ENCODE measurements at regions of chr9 and their contacts with region 1.

Region 1: DNA sequence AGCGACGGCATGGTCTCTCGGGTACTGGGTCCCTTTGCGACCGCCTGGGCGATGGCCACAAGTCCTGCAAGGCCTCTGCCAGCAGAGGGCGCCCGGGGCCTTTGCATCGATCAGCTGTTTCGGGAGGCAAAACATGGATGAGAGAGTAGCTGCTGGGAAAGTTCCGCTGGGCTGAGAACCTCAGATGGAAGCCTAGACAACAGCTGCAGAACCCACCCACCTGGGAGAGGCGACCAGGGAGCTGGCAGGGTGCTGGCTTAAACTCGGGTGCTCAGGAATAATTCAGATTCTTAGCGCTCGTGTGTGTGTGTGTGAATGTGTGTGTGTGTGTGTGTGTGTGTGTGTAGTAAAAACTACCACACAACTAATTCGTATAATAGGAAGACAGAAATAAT is 50.0 kb downstream of the TRIM32 start:
- DNase-seq: peak in 5 of 9 donors; percentile 1 to 68 (median 7)
- ATAC-seq: peak; percentile 36
- H3K4me3 ChIP-seq: no peak overlapping the region
- H3K4me3 Mint-ChIP-seq: peak overlapping the region in 2 of 10 donors; percentile 4 to 8
- H3K27ac ChIP-seq: no peak overlapping the region
- H3K27ac Mint-ChIP-seq: no peak overlapping the region
- H3K4me1 ChIP-seq: no peaks in the 10 kb centered on the region
- H3K4me1 Mint-ChIP-seq: peaks cover 0 to 11% (median 0%) of the 10 kb centered on the region in 7 donors
- H3K27me3 ChIP-seq: no peaks in the 10 kb centered on the region
- H3K27me3 Mint-ChIP-seq: peaks cover 0 to 32% (median 13%) of the 10 kb centered on the region in 5 donors

Region 2: DNA sequence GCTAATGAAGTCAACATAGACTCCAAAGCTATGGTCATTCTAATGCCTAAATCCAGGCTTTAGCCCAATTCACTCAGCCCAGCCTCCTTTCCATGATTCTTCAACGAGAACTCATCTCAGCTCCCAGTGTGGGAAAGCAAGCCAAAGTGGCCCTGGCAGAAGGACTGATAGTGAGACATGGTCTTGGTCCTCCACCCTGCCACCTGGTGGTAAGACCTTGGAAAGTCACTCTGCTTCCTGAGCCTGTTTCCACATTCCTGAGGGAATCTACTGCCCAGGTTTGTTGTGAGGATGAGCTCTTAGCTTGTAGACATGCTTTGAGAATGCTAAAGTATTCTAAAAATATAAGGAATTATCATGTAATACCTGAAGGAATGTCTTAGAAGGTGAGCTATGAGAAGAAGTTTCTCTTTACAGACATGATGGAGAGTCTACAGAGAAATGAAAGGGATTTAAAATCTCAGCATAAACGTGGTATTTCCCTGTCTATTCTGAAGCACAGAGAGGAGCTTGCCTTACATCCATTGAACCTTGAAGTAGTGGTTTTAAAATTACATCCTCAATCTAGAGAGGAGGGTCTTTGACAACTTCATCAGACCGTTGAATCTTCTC is 123.5 kb after region 1 on chr9:
- CTCF ChIA-PET with region 1: no interaction called
- POLR2A ChIA-PET with region 1: no interaction called
- intact Hi-C with region 1: loop called in 1 of 2 experiments (anchors 1 kb)
- DNase-seq: no peak
- ATAC-seq: no peak
- H3K4me3 ChIP-seq: no peak overlapping the region
- H3K4me3 Mint-ChIP-seq: no peak overlapping the region
- H3K27ac ChIP-seq: no peak overlapping the region
- H3K27ac Mint-ChIP-seq: no peak overlapping the region
- H3K4me1 ChIP-seq: no peaks in the 10 kb centered on the region
- H3K4me1 Mint-ChIP-seq: no peaks in the 10 kb centered on the region
- H3K27me3 ChIP-seq: no peaks in the 10 kb centered on the region
- H3K27me3 Mint-ChIP-seq: peaks cover 0 to 31% (median 12%) of the 10 kb centered on the region in 5 donors

Measured in naive thymus-derived CD4-positive, alpha-beta T cell (primary cell).